ENCODE measurements at regions of chr15 and their contacts with region 1.

Region 1: GRCh38 chr15:53962332-53963241 is 15.7 kb upstream of the UNC13C start:
- DNase-seq: peak; percentile 56
- H3K4me3 Mint-ChIP-seq: no peak overlapping the region
- H3K27ac Mint-ChIP-seq: no peak overlapping the region
- H3K4me1 Mint-ChIP-seq: no peaks in the 10 kb centered on the region
- H3K27me3 Mint-ChIP-seq: peaks cover 9% of the 10 kb centered on the region

Region 2: GRCh38 chr15:53675832-53676231 is 286.8 kb before region 1 on chr15:
- CTCF ChIA-PET with region 1: no interaction called
- intact Hi-C with region 1: no loop called
- DNase-seq: no peak
- H3K4me3 Mint-ChIP-seq: no peak overlapping the region
- H3K27ac Mint-ChIP-seq: no peak overlapping the region
- H3K4me1 Mint-ChIP-seq: no peaks in the 10 kb centered on the region
- H3K27me3 Mint-ChIP-seq: no peaks in the 10 kb centered on the region

Region 3: DNA sequence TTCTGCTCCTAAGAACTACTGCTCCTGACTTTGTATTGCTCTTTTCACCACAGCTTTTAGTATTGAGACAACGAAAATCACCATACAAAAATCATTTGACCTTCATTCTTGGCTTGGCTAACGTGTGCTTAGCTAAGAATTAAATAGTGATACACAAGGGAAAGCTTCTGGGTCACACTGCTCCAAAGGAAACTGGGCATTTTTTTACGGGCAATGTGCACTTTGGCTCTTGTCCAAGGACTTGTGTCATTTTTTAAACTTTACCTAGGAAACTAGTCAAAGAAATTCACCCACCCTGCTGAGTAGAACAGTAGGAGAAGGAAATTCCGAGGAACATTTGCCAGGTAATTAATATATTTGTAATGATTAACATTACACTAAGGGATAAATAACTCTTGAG is 222.9 kb before region 1 on chr15:
- CTCF ChIA-PET with region 1: no interaction called
- intact Hi-C with region 1: no loop called
- DNase-seq: no peak
- H3K4me3 Mint-ChIP-seq: no peak overlapping the region
- H3K27ac Mint-ChIP-seq: no peak overlapping the region
- H3K4me1 Mint-ChIP-seq: no peaks in the 10 kb centered on the region
- H3K27me3 Mint-ChIP-seq: peaks cover 6% of the 10 kb centered on the region

Region 4: GRCh38 chr15:53899366-53899765 is 63.2 kb before region 1 on chr15:
- CTCF ChIA-PET with region 1: no interaction called
- intact Hi-C with region 1: no loop called
- DNase-seq: no peak
- H3K4me3 Mint-ChIP-seq: no peak overlapping the region
- H3K27ac Mint-ChIP-seq: no peak overlapping the region
- H3K4me1 Mint-ChIP-seq: no peaks in the 10 kb centered on the region
- H3K27me3 Mint-ChIP-seq: peaks cover 11% of the 10 kb centered on the region

Region 5: DNA sequence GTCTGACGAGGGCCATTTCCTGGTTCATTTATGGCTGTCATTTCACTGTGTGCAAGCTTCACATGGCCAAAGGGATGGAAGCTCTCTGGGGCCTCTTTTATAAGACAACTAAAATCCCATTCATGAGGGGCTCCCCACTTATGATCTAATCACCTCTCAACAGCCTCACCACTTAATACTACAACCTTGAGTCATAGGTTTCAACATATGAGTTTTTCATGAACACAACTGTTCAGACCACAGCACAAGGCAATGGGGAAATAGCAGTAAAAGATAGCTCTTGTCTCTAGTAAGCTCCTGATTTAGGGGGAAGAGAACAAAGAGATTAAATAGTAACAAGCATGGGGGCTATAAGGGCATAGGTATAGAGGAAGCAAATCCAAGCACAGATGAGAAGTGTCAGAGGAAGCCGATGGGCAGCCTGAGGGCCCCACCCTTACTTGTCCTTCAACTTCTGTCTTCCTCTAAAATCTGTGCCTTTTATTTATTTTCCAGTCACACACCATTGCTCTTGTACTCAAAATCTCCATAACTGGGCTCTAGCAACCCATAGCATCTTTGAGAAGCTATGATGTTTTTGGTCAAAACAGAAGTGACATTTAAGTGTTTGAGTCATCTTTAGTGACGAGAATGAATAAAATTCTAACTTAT is 344.8 kb after region 1 on chr15:
- CTCF ChIA-PET with region 1: no interaction called
- intact Hi-C with region 1: no loop called
- DNase-seq: no peak
- H3K4me3 Mint-ChIP-seq: no peak overlapping the region
- H3K27ac Mint-ChIP-seq: no peak overlapping the region
- H3K4me1 Mint-ChIP-seq: no peaks in the 10 kb centered on the region
- H3K27me3 Mint-ChIP-seq: no peaks in the 10 kb centered on the region

Region 6: DNA sequence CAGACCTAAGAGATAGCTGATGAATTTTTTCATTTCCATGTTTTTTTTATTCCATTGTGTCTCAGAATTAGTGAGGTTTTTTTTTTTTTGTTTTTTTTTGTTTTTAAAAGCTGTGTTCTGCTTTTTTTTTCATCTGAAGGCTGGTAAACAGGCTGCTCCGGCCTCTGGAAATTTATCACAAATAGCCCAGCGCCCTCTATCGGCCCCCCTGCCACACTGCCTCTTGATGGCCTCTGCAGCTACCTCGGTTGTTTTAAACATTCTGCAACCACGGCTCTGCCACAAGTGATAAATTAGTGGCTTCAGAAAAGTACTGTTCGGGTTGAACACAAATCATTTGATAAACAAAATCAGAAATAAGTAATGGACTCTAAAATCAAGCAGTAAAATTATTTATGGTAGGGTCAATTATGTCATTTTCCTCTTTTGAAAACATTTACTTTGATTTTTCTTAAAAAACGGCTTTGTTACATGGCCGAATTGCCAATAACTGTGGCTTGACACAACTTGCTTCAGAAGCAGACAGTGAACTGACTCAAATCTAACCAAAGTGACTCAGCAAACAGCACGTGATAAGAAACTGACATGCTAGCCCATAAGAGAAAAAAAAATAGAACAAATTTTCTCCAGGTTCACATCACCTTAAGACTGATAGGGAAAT is 1146.4 kb after region 1 on chr15:
- CTCF ChIA-PET with region 1: no interaction called
- intact Hi-C with region 1: loop called (anchors 1 kb)
- DNase-seq: peak; percentile 78
- H3K4me3 Mint-ChIP-seq: no peak overlapping the region
- H3K27ac Mint-ChIP-seq: no peak overlapping the region
- H3K4me1 Mint-ChIP-seq: no peaks in the 10 kb centered on the region
- H3K27me3 Mint-ChIP-seq: no peaks in the 10 kb centered on the region

Region 7: GRCh38 chr15:55168329-55168974 is 1205.9 kb after region 1 on chr15:
- CTCF ChIA-PET with region 1: no interaction called
- intact Hi-C with region 1: loop called (anchors 1 kb)
- DNase-seq: peak; percentile 75
- H3K4me3 Mint-ChIP-seq: no peak overlapping the region
- H3K27ac Mint-ChIP-seq: no peak overlapping the region
- H3K4me1 Mint-ChIP-seq: no peaks in the 10 kb centered on the region
- H3K27me3 Mint-ChIP-seq: no peaks in the 10 kb centered on the region

Region 8: DNA sequence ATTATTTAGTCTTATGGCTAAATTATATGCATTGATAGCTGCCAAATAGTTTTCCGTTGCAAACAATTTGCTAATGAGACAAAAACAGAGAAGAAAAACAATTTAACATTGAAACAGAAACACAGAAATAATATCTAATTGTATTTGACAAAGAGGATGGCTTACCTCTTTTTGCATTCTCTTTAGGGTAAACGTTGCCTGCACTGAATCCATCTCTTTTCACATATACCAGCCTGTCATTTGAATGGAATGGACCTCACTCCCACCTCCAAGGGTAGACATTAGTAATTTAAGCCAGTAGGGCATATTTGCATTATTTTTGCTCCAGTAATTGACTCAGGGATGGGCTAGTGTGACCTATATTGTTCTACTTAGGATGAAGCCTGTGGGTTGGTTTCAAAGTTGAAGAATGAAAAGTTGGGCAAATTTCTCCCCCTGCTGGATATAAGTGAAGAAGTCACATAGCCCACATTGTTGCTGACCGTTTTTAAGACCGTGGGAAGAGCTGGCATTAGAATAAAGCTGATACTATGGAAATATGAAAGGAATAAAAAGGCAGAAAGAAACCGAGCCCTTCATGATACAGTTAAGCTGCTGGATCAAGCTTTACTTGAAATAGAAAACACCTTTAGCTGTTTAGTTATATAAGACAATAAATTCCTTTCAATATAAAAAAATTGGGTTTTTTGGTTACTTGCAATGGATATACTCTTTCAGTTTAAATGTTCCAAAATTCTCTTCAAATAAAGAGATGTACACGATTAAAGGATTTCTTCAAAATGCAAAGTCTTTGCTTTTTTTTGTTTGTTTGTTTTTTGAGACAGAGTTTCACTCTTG is 1472.6 kb after region 1 on chr15:
- CTCF ChIA-PET with region 1: interaction called, 5 read pairs
- intact Hi-C with region 1: loop called (anchors 5 kb)
- DNase-seq: peak; percentile 14
- H3K4me3 Mint-ChIP-seq: no peak overlapping the region
- H3K27ac Mint-ChIP-seq: no peak overlapping the region
- H3K4me1 Mint-ChIP-seq: no peaks in the 10 kb centered on the region
- H3K27me3 Mint-ChIP-seq: no peaks in the 10 kb centered on the region